ENCODE measurements at regions of chr19 and their contacts with region 1.

Region 1: GRCh38 chr19:18340190-18340989 is at the start of gene PGPEP1:
- DNase-seq: peak in 3 of 4 donors; percentile 75 to 92 (median 77)
- ATAC-seq: peak; percentile 94
- H3K4me3 ChIP-seq: peak within 1 kb of the TSS; percentile 91 to 96
- H3K27ac ChIP-seq: peak within 1 kb of the TSS; percentile 60 to 81
- H3K4me1 ChIP-seq: peaks cover 6 to 29% of the 10 kb centered on the region in 2 donors
- H3K27me3 ChIP-seq: no peaks in the 10 kb centered on the region
- CTCF ChIP-seq: no peak
- polyA plus RNA-seq, gene PGPEP1: 16.1 to 21.7 (median 20.0) TPM

Region 2: DNA sequence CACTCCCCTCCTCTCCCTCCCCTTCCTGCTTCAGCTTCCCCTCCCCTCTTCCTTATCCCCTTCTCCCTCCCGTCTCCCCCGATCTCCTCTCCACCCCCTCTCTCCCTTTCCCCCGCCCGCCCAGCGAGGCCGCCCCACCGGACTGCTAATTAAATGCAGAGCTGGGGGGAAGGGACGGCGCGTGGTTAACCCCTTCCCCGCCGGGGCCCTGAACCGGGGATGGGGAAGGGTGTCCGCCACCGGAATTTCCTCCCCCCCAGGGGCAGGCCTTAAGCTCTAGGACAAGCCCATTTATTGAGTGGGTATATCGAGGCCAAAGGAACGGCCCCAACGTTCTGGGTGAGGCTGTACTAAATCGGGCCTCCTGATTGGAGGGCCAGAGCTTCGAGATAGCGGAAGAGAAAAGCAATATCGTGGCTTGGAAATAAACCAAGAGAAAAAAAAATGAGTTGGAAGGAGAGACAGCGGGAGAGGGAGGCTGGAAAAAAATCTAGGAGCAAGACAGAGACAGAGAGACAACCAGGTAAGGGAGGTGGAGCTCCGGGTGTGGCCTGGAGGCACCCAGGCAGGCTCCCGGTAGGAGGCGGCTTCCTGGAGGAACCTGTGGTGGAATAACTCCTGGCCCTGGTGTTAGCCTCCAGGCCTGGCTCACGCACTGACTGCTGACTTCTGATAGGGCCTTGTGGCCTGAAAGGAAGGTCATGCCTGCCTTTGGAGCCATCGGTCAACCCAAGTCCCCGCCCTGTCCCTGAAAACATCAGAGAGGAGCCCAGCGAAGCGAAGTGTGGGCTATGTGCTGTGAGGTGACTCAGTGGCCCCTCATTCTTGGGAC is 47.4 kb before region 1 on chr19:
- intact Hi-C with region 1: no loop called
- DNase-seq: peak in 3 of 4 donors; percentile 91 to 92 (median 91)
- ATAC-seq: peak; percentile 67
- H3K4me3 ChIP-seq: peak overlapping the region; percentile 53 to 74
- H3K27ac ChIP-seq: peak overlapping the region; percentile 98 to 100
- H3K4me1 ChIP-seq: peaks cover 10 to 33% of the 10 kb centered on the region in 2 donors
- H3K27me3 ChIP-seq: no peaks in the 10 kb centered on the region
- CTCF ChIP-seq: no peak

Region 3: DNA sequence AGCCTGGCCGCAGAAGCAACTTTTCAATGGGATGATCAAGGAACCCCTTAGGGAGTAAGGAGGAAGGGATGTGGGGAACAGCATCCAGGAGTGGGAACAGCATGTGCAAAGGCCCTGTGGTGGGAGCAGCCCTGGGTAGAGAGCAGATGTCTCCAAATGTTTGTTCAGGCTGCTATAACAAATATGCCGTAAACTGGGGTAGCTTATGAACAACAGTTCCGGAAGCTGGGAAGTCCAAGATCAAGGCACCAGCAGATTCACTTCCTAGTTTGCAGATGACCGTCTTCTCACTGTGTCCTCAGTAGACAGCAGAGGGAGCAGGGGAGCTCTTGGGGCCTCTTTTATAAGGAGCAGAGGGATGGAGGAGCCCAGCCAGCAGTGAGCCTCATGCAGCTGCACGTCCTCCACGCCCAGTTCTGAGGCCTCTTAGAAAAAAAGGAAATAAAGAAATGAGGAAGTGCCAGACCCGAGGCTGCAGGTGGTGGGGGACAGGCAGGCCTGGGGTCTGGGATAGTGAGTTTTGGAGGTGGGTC is 61.3 kb after region 1 on chr19:
- intact Hi-C with region 1: loop called (anchors 5 to 10 kb)
- DNase-seq: peak in 2 of 4 donors; percentile 76 to 88
- ATAC-seq: peak; percentile 78
- H3K4me3 ChIP-seq: no peak overlapping the region
- H3K27ac ChIP-seq: peak overlapping the region in 1 of 2 donors; percentile 69
- H3K4me1 ChIP-seq: peaks cover 0 to 69% of the 10 kb centered on the region in 2 donors
- H3K27me3 ChIP-seq: peaks cover 0 to 13% of the 10 kb centered on the region in 2 donors
- CTCF ChIP-seq: peak in 1 of 2 donors; percentile 21

Measured in left lung (tissue), 14 donors.